AG04450 (cell line): ENCODE measurements at regions of chr1 and their contacts with region 1.

Region 1: GRCh38 chr1:94095112-94095637 is 25.8 kb downstream of the ABCA4 start:
- DNase-seq: peak; percentile 81
- H3K4me3 ChIP-seq: peak overlapping the region; percentile 17; the same call in 1 of the 2 replicates
- H3K27ac ChIP-seq: peak overlapping the region; percentile 97
- H3K27me3 ChIP-seq: no peaks in the 10 kb centered on the region
- CTCF ChIP-seq: peak; percentile 9; the same call in 1 of the 2 replicates

Region 2: DNA sequence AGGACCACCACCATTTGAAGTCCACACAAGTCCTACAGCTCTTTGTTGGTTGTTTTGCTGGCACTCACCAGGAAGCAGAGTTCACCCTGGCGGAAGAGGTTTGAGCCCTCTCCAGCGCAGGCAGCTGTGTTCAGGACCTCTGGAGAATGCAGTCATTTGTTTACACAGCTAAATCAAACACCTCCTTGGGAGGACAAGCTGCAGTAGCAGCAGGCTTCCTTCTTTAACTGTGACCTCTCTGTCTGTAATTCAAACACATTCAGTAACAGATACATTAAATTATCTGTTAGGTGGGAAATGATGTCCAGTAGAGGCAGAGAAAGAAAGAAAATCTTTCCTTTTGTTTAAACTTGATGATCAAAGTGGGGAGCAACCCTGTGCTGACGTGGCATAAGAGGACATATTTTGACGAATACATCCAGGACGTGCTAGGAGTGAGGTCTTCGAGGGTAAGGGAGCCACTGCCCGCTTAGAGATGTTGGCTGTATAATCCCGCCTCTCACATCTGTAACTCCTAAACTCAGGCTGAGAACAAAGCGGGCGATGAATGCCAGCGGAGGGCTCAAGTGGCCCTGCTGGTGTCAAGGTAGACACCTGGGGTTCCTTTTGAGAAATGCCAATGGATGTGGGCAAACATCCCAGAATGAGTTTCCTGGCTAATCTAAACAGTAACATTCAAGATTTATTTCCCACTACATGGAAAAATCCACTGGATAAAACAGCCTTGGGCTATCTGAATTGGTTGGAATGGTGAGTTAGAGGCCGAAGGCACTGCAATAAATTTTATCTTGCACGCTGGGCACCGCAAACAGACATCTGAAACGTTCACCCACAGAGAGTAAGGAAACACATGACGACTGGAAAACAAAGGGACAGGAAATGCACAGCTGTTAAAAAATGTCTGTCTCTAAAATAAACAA is 25.9 kb before region 1 on chr1:
- CTCF ChIA-PET with region 1: interaction called, 4 read pairs
- POLR2A ChIA-PET with region 1: interaction called, 15 read pairs
- DNase-seq: peak; percentile 62
- H3K4me3 ChIP-seq: no peak overlapping the region
- H3K27ac ChIP-seq: peak overlapping the region; percentile 63
- H3K27me3 ChIP-seq: no peaks in the 10 kb centered on the region
- CTCF ChIP-seq: no peak

Region 3: GRCh38 chr1:94111879-94112278 is 16.7 kb after region 1 on chr1:
- CTCF ChIA-PET with region 1: no interaction called
- POLR2A ChIA-PET with region 1: no interaction called
- DNase-seq: no peak
- H3K4me3 ChIP-seq: no peak overlapping the region
- H3K27ac ChIP-seq: no peak overlapping the region
- H3K27me3 ChIP-seq: no peaks in the 10 kb centered on the region
- CTCF ChIP-seq: no peak